ENCODE measurements at regions of chr3 and their contacts with region 1.

Region 1: DNA sequence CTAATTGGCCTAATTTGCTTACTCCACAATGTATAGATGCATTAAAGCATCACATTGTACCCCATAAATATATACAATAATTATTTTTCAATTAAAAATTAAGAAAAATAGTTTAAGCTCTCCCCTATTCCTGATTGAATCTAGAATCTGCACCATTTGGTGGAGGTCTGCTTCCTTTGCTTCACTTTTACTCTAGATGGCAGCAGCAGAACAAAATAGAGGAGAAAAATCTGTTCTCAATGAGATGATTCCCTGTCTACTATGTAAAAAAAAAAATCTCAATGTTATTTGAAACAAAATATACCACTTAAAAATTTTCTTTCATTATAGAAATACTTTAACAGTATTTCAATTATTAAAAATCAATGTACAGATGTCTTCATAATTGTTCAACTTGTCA is 109.6 kb upstream of the FXR1 start:
- DNase-seq: no peak
- ATAC-seq: no peak

Region 2: GRCh38 chr3:180690061-180690460 is 112.8 kb before region 1 on chr3:
- intact Hi-C with region 1: no loop called
- DNase-seq: no peak
- ATAC-seq: no peak

Region 3: GRCh38 chr3:180707896-180708295 is 94.9 kb before region 1 on chr3:
- intact Hi-C with region 1: no loop called
- DNase-seq: no peak
- ATAC-seq: no peak

Region 4: DNA sequence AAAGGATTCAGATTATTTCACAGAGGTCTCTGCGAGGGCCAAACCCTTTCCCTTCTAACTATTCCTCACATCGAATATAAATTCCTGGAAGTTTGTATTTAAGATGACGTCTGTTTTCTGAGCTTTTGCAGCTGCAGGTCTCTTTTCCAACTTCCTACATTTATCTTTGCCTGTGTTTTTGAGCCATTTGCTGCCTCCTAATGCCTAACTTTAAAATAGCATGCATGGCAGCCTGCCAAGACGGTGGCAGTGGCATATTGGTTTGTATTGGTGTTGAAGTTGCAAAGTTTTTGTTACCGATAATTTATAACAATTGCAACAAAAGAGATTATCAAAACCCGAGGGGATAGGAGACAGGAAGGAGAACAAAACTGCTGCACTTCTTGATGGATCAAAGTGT is 373.8 kb after region 1 on chr3:
- intact Hi-C with region 1: loop called (anchors 10 kb)
- DNase-seq: peak; percentile 70
- ATAC-seq: no peak